Activated CD4-positive, alpha-beta T cell treated with anti-CD3 and anti-CD28 coated beads for 36 hours (primary cell): ENCODE measurements at regions of chr15 and their contacts with region 1.

Region 1: GRCh38 chr15:59583088-59583487 is 28.5 kb upstream of the GCNT3 start:
- DNase-seq: no peak
- ATAC-seq: no peak
- H3K4me3 Mint-ChIP-seq: no peak overlapping the region
- H3K27ac Mint-ChIP-seq: no peak overlapping the region
- H3K4me1 Mint-ChIP-seq: peaks cover 10% of the 10 kb centered on the region
- H3K27me3 Mint-ChIP-seq: peaks cover 6% of the 10 kb centered on the region

Region 2: DNA sequence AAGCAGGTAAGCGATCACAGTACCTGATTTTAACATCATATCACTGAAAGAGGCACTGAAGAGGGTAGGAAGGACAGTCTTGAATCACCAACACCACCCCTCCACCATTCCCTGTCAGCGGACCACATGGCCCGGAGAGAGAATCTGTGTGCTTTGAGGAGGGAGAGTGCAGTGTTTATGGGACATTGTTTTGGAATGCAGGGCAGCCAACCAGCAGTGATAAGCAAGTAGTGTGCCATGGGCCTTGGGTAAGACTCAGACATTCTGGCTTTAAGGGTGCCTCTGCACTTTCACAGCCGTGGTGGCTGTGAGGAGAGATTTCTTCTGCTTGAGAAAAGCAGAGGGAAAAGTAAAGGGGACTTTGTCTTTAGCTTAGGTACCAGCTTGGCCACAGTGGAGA is 98.7 kb before region 1 on chr15:
- CTCF ChIA-PET with region 1: no interaction called
- POLR2A ChIA-PET with region 1: no interaction called
- intact Hi-C with region 1: no loop called
- DNase-seq: no peak
- ATAC-seq: no peak
- H3K4me3 Mint-ChIP-seq: no peak overlapping the region
- H3K27ac Mint-ChIP-seq: no peak overlapping the region
- H3K4me1 Mint-ChIP-seq: no peaks in the 10 kb centered on the region
- H3K27me3 Mint-ChIP-seq: peaks cover 5% of the 10 kb centered on the region

Region 3: GRCh38 chr15:59550525-59550924 is 32.6 kb before region 1 on chr15:
- CTCF ChIA-PET with region 1: no interaction called
- POLR2A ChIA-PET with region 1: no interaction called
- intact Hi-C with region 1: no loop called
- DNase-seq: no peak
- ATAC-seq: no peak
- H3K4me3 Mint-ChIP-seq: no peak overlapping the region
- H3K27ac Mint-ChIP-seq: no peak overlapping the region
- H3K4me1 Mint-ChIP-seq: no peaks in the 10 kb centered on the region
- H3K27me3 Mint-ChIP-seq: peaks cover 6% of the 10 kb centered on the region

Region 4: DNA sequence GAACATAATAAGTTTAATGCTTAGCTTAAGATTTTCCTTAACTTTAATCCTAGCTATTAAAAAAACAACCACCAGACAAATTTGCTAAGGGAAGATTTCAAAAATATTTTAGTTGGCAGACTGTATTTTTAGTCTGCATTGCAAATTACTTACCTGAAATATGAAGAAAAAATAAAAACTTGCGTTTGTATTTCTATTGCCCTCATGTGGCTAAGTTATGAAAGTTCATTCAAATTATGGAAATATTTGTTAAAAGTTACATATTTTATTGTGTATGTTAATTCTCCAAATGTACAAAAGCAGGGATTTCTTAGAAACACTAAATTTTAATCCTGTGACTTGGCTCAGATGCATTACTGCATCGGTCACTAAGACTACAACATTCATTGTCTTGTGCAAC is 59.3 kb after region 1 on chr15:
- CTCF ChIA-PET with region 1: no interaction called
- POLR2A ChIA-PET with region 1: no interaction called
- intact Hi-C with region 1: loop called in 1 of 2 experiments (anchors 5 kb)
- DNase-seq: no peak
- ATAC-seq: no peak
- H3K4me3 Mint-ChIP-seq: no peak overlapping the region
- H3K27ac Mint-ChIP-seq: peak overlapping the region; percentile 42
- H3K4me1 Mint-ChIP-seq: peaks cover 16% of the 10 kb centered on the region
- H3K27me3 Mint-ChIP-seq: no peaks in the 10 kb centered on the region